ENCODE measurements at regions of chr6 and their contacts with region 1.

Region 1: GRCh38 chr6:122839477-122839876 is 50.4 kb downstream of the SMPDL3A start:
- DNase-seq: peak; percentile 89
- H3K4me3 ChIP-seq: peak overlapping the region; percentile 2
- H3K27ac ChIP-seq: no peak overlapping the region
- H3K4me1 ChIP-seq: peaks cover 27% of the 10 kb centered on the region
- H3K27me3 ChIP-seq: no peaks in the 10 kb centered on the region
- CTCF ChIP-seq: peak; percentile 78

Region 2: DNA sequence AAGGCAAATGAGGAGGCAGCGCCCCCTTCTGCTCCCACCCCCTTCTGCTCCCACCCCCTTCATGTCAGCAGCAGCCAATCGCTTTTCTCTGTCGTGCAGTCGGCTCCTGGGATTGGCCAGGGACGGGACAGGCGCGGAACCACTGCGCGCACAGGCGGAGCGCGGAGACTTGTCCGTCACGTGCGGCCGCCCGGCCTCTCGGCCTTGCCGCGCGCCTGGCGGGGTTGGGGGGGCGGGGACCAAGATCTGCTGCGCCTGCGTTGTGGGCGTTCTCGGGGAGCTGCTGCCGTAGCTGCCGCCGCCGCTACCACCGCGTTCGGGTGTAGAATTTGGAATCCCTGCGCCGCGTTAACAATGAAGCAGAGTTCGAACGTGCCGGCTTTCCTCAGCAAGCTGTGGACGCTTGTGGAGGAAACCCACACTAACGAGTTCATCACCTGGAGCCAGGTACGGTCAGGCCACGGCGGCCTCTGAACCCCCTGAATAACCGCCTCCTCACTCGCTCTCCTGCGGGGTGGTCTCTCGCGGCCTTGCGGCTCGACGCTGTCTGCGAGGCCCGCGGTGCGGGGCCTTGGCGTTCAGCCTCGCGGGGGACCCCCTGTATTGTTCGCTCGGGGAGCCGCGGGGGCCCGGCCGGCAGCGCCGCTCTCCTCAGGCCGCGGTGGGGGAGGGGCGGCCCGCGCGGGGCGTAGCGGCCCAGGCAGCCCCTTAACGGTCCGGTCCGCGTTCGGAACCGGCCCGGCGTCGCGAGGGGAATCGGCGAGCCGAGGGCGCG is 439.9 kb before region 1 on chr6 and contains the start of gene HSF2:
- CTCF ChIA-PET with region 1: no interaction called
- POLR2A ChIA-PET with region 1: no interaction called
- intact Hi-C with region 1: loop called (anchors 10 kb)
- DNase-seq: peak; percentile 99
- H3K4me3 ChIP-seq: peak within 1 kb of the TSS; percentile 99
- H3K27ac ChIP-seq: peak within 1 kb of the TSS; percentile 93
- H3K4me1 ChIP-seq: peaks cover 11% of the 10 kb centered on the region
- H3K27me3 ChIP-seq: no peaks in the 10 kb centered on the region
- CTCF ChIP-seq: no peak; the same call in 1 of the 2 replicates
- total RNA-seq, gene HSF2: 27.5 and 31.3 TPM in 2 replicates

Region 3: DNA sequence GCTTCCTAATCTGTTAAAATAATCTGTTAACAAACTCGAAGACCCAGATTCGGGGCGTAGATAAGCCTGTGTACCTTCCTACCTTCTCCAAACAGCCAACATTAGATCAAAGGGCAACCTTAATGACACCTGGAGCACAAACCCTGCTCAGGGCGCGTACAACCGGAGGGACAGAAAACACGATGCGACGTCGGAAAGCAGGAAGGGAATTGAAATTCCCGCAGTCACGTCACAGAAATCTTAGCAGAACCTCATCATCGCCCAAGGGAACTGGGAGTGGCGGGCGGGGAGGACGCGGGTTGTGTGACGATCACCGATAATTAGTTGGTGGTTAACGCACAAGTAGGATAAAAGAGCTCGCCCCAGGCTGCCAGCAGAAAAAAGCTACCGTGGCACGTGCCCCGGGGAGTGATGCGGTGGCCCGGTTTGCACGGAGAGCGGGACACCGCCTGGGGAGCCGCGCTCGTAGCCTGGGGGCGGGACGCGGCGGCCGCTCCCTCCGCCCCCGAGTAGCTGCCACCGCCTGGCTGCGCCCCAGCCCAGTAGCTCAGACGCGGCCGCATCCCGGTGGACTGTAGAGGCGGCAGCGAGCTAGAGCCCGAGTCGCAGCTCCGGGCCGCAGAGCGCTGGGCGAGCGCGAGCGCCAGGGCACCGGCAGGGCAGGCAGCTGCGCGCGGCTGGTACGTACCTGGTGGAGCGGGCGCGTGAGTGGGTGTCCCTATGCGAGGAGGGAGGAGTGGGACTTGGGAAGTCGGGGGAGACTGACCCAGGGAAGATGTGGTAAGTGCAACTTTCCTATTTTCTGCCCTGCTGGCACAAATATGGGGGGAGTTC is 229.4 kb before region 1 on chr6 and contains the start of gene PKIB:
- CTCF ChIA-PET with region 1: interaction called, 3 read pairs
- POLR2A ChIA-PET with region 1: no interaction called
- intact Hi-C with region 1: loop called (anchors 10 kb)
- DNase-seq: peak; percentile 91
- H3K4me3 ChIP-seq: peak within 1 kb of the TSS; percentile 68
- H3K27ac ChIP-seq: peak within 1 kb of the TSS; percentile 3
- H3K4me1 ChIP-seq: no peaks in the 10 kb centered on the region
- H3K27me3 ChIP-seq: no peaks in the 10 kb centered on the region
- CTCF ChIP-seq: peak; percentile 53
- total RNA-seq, gene PKIB: 10.4 and 11.5 TPM in 2 replicates

Region 4: DNA sequence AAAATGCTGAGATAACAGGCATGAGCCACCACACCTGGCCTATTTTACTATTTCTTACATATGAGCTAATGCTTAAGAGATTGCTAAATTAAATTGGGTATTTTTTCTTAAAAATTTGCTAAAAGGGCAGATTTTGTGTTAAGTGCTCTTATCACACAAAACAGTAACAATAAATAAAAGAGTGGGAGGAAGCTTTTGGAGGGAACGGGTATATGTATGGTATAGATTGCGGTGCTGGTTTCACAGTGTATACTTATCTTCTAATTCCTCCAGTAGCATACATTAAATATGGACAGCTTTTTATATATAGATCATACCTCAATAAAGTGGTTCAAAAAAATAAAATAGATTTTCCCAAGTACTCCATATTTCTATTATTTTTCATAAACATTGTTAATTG is 99.4 kb before region 1 on chr6:
- CTCF ChIA-PET with region 1: interaction called, 22 read pairs
- POLR2A ChIA-PET with region 1: interaction called, 10 read pairs
- intact Hi-C with region 1: loop called (anchors 1 kb)
- DNase-seq: no peak
- H3K4me3 ChIP-seq: no peak overlapping the region
- H3K27ac ChIP-seq: no peak overlapping the region
- H3K4me1 ChIP-seq: peaks cover 18% of the 10 kb centered on the region
- H3K27me3 ChIP-seq: no peaks in the 10 kb centered on the region
- CTCF ChIP-seq: no peak

Region 5: DNA sequence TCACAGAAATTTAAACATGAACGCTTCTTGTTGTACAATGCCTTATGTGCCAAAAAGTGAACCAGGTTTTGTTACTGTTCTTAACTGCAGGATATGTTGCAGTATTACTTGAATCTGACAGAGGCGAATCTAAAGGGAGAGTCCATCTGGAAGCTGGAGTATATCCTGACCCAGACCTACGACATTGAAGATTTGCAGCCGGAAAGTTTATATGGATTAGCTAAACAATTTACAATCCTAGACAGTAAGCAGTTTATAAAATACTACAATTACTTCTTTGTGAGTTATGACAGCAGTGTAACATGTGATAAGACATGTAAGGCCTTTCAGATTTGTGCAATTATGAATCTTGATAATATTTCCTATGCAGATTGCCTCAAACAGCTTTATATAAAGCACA is 30.5 kb before region 1 on chr6:
- CTCF ChIA-PET with region 1: interaction called, 4 read pairs
- POLR2A ChIA-PET with region 1: no interaction called
- intact Hi-C with region 1: loop called (anchors 2 kb)
- DNase-seq: peak; percentile 64
- H3K4me3 ChIP-seq: peak overlapping the region; percentile 27
- H3K27ac ChIP-seq: peak overlapping the region; percentile 87
- H3K4me1 ChIP-seq: peaks cover 40% of the 10 kb centered on the region
- H3K27me3 ChIP-seq: no peaks in the 10 kb centered on the region
- CTCF ChIP-seq: no peak

Measured in A673 (cell line).